Activated T-helper 1 cell treated with anti-CD3 and anti-CD28 coated beads, Interleukin-12 subunit alpha, Interleukin-12 subunit beta, Interleukin-2, Interleukin-4 antibody, amounts not matched to agents 30 ng/mL and 10 ng/mL and 1 ng/mL, durations not matched to agents 14 hours and 24 hours and 36 hours (primary cell): ENCODE measurements at regions of chr22 and their contacts with region 1.

Region 1: DNA sequence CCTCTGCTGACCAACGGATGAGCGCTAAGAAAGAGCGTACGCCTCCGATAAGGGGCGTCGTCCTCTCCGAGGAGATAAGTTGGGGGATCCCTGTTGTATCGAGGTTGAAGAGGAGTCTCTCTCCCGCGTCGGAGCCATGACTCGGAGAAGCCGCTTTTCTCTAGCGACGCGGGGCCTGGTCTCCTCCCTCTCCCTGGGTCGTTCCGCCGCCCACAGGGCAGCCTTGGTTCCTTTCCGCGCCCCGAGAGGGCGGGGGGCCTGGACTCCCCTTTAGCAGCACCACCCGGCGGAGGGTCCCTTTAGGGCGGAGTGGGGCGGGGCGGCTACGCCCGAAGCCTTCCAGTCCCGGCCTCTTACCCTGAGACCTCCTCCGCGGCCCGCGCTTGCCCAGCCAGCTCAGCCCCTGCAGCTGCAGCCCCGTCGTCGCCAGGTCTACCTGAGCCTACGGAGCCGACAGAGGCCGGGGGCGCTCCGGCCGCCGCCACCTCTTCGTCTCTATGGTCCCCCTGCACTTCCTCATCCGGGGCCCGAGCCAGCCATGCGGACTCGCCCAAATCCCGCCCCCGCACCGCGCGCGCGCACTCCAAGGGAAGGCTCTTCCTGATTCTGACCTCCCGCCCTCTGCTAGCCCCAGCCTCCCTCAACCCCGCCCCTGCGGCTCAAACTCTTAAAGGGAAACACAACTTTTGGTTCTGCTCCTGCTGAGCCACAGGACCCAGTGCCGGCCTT is at the start of gene PRR14L:
- DNase-seq: peak; percentile 98
- H3K4me3 Mint-ChIP-seq: peak within 1 kb of the TSS; percentile 87
- H3K27ac Mint-ChIP-seq: peak within 1 kb of the TSS; percentile 97
- H3K4me1 Mint-ChIP-seq: peaks cover 49% of the 10 kb centered on the region
- H3K27me3 Mint-ChIP-seq: no peaks in the 10 kb centered on the region
- total RNA-seq, gene PRR14L: 65.2 and 69.6 TPM in 2 replicates

Region 2: GRCh38 chr22:31211862-31212730 is 537.7 kb before region 1 on chr22 and contains the start of gene LIMK2:
- intact Hi-C with region 1: loop called (anchors 2 kb)
- DNase-seq: peak; percentile 95
- H3K4me3 Mint-ChIP-seq: peak within 1 kb of the TSS; percentile 89
- H3K27ac Mint-ChIP-seq: peak within 1 kb of the TSS; percentile 83
- H3K4me1 Mint-ChIP-seq: peaks cover 54% of the 10 kb centered on the region
- H3K27me3 Mint-ChIP-seq: no peaks in the 10 kb centered on the region
- total RNA-seq, gene LIMK2: 39.8 and 40.7 TPM in 2 replicates

Region 3: DNA sequence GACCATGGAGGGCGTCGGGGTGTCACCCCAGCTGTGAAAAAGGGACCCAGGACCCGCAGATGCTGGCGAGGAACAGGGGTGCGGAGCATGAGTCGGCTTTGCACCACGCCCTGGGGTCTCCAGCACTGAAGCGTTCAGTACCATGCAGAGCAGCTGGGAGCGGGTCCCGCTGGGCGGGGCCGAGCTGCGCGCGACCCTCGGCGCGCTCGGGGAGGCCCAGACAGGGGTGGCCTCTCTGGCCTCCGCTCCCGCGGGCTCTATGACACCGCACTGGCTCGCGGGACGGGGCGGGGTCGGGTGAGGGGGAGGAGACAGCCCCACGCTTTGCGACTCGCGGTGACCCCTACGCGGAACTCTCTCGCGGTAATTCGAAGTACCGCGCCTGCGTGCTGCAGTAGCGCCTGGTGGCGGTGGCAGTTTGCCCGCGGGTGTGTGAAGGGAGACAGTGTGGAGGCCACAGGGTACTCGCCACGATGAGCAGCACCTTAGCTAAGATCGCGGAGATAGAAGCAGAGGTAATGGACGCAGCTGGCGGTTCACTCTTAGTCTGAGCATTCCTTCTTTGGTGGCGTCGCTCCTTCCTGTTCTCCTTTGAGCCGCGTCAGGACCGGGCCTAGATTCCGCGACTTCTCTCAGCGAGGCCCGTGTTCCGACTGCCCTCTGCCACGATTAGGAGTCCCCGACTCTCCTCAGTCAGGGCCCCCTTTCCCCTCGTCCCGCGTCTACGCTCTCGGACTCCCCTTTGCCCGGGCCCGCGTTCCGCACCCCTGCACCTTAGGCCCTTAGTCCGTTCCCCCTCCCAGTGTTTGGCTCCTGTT is 350.4 kb before region 1 on chr22 and contains the start of gene DRG1:
- intact Hi-C with region 1: loop called (anchors 2 kb)
- DNase-seq: peak; percentile 97
- H3K4me3 Mint-ChIP-seq: peak within 1 kb of the TSS; percentile 100
- H3K27ac Mint-ChIP-seq: peak within 1 kb of the TSS; percentile 93
- H3K4me1 Mint-ChIP-seq: peaks cover 13% of the 10 kb centered on the region
- H3K27me3 Mint-ChIP-seq: peaks cover 2% of the 10 kb centered on the region
- total RNA-seq, gene DRG1: 113 and 125 TPM in 2 replicates

Region 4: DNA sequence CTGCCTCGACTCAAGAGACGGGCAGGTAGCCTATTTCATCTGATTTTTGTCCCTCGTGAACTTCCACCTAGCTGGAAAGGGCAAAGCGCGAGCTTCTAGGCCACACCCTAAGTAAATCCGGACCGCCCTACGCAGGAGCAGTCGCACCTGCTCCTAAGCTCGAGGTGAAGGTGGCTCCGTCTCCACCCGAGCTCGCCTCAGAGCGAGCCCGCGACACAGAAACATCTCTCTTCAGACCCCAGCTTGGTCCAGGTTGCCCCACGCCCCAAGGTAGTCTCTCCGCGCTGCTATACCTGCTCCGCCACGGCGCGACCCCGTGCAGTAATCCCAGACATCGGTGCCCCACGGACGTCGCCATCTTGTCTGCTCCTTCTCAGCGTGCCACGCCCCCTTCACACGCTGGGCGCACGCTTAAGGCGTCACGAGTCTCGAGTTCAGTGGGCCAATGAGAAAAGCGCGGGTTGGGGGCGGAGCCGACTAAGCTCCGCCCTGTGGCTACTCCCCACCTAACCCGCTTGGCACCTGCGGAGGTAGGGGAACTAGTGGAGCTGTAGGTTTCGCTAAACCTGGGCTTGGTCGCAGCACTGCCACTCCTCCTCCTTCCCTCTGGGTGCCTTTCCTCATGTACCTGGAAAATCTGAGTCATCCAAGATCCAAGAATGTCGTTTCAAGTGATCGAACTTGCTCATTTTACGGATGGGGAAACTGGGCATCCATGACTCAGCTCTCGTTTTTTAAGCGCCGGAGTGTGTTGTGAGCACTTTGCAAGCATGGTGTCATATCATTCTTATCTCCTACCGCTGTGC is 87.7 kb before region 1 on chr22 and contains the start of gene PISD:
- intact Hi-C with region 1: loop called (anchors 1 kb)
- DNase-seq: peak; percentile 96
- H3K4me3 Mint-ChIP-seq: peak within 1 kb of the TSS; percentile 99
- H3K27ac Mint-ChIP-seq: peak within 1 kb of the TSS; percentile 95
- H3K4me1 Mint-ChIP-seq: peaks cover 29% of the 10 kb centered on the region
- H3K27me3 Mint-ChIP-seq: peaks cover 2% of the 10 kb centered on the region
- total RNA-seq, gene PISD: 43.8 and 43.9 TPM in 2 replicates

Region 5: DNA sequence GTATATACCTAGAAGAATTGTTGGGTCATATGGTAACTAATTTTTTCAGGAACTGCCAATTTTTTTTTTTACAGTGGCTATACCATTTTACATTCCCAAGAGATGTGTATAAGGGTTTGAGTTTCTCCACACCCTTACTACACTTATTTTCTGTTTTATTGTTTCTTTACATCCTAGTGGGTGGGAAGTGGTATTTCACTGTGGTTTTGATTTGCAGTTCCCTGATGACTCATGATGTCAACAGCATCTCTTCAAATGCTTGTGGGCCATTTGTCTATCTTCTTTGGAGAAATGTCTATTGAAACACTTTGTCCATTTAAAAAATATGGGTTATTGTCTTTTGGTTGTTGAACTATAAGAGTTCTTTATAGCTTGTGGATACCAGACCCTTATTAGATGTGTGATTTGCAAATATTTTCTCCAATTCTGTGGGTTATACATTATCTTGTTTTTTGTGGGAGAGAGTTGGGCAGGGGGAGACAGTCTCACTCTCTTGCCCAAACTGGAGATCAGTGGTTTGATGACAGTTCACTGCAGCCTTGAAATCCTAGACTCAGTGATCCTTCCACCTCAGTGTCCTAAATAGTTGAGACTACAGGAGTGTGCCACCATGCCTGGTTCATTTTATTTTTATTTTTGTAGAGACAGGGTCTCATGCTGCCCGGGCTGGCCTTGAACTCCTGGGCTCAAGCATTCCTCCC is 57.5 kb before region 1 on chr22:
- intact Hi-C with region 1: loop called (anchors 5 kb)
- DNase-seq: peak; percentile 11
- H3K4me3 Mint-ChIP-seq: peak overlapping the region; percentile 53
- H3K27ac Mint-ChIP-seq: peak overlapping the region; percentile 87
- H3K4me1 Mint-ChIP-seq: peaks cover 31% of the 10 kb centered on the region
- H3K27me3 Mint-ChIP-seq: no peaks in the 10 kb centered on the region

Region 6: DNA sequence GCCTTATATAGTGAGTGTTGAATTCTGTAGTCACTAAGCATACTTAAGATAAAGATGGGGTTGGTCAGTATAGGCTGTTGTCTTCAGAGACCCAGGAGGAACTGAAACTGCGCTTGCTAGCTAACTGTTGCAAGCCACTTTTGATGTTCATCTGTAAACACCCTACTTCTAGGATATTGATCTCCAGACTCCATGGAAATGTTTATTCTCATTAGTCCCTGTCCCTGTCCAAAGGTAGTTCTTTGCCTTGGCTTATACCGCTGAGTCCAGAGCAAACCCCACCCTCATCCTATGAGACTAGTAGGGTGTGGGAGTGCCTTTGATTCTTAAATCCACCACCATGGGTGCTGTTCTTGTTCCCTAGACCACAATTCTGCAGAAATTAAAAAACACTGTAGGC is 40.4 kb after region 1 on chr22:
- intact Hi-C with region 1: no loop called
- DNase-seq: no peak
- H3K4me3 Mint-ChIP-seq: no peak overlapping the region
- H3K27ac Mint-ChIP-seq: no peak overlapping the region
- H3K4me1 Mint-ChIP-seq: peaks cover 6% of the 10 kb centered on the region
- H3K27me3 Mint-ChIP-seq: no peaks in the 10 kb centered on the region

Region 7: DNA sequence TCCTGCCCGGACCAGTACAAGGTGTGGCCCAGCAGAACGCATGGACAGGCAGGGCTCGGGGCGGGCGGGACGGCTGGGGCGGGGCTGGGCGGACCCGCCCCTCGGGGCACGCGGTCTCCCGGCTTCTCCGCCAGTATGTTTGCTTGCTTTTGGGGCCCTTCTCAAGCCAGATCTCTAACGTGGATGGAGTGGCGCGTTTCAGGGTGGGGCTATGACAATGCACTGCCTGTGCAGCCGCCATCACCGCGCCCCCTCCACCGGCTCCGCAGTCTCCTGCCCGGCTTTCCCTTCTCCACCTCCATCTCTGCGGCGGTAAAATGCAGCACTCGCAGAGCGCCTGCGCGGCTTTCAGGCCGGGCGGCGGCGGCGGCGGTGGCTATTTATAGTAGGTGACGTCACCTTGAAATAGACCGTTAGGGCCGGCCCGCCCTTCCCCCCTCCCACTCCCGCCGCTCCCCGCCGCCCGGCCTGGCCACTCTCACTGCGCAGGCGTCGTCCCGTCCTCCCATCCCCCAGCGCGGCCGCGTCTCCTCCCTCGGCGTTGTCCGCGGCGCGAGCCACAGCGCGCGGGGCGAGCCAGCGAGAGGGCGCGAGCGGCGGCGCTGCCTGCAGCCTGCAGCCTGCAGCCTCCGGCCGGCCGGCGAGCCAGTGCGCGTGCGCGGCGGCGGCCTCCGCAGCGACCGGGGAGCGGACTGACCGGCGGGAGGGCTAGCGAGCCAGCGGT is 194.3 kb after region 1 on chr22 and contains the start of gene YWHAH:
- intact Hi-C with region 1: loop called (anchors 1 kb)
- DNase-seq: peak; percentile 87
- H3K4me3 Mint-ChIP-seq: peak within 1 kb of the TSS; percentile 90
- H3K27ac Mint-ChIP-seq: peak within 1 kb of the TSS; percentile 96
- H3K4me1 Mint-ChIP-seq: peaks cover 21% of the 10 kb centered on the region
- H3K27me3 Mint-ChIP-seq: no peaks in the 10 kb centered on the region
- total RNA-seq, gene YWHAH: 128 and 139 TPM in 2 replicates

Region 8: GRCh38 chr22:32474635-32475467 is 725.1 kb after region 1 on chr22 and contains the start of gene FBXO7:
- intact Hi-C with region 1: loop called (anchors 5 kb)
- DNase-seq: peak; percentile 82
- H3K4me3 Mint-ChIP-seq: peak within 1 kb of the TSS; percentile 93
- H3K27ac Mint-ChIP-seq: peak within 1 kb of the TSS; percentile 93
- H3K4me1 Mint-ChIP-seq: peaks cover 33% of the 10 kb centered on the region
- H3K27me3 Mint-ChIP-seq: peaks cover 7% of the 10 kb centered on the region
- total RNA-seq, gene FBXO7: 92.3 and 97.8 TPM in 2 replicates